Naive thymus-derived CD4-positive, alpha-beta T cell (primary cell): ENCODE measurements at regions of chrX and their contacts with region 1.

Region 1: GRCh38 chrX:55160685-55161552 is 59.2 kb upstream of the PAGE5 start:
- DNase-seq: peak; percentile 77 to 92 (median 89)
- ATAC-seq: peak; percentile 95
- H3K4me3 ChIP-seq: peak overlapping the region; percentile 83
- H3K4me3 Mint-ChIP-seq: peak overlapping the region; percentile 85 to 98 (median 93)
- H3K27ac ChIP-seq: peak overlapping the region; percentile 95
- H3K27ac Mint-ChIP-seq: peak overlapping the region; percentile 91 to 99 (median 98)
- H3K4me1 ChIP-seq: peaks cover 0 to 3% of the 10 kb centered on the region in 2 donors
- H3K4me1 Mint-ChIP-seq: peaks cover 3 to 13% (median 10%) of the 10 kb centered on the region in 7 donors
- H3K27me3 ChIP-seq: no peaks in the 10 kb centered on the region
- H3K27me3 Mint-ChIP-seq: peaks cover 0 to 9% (median 0%) of the 10 kb centered on the region in 5 donors

Region 2: GRCh38 chrX:53321230-53321942 is 1839.5 kb before region 1 on chrX:
- CTCF ChIA-PET with region 1: no interaction called
- POLR2A ChIA-PET with region 1: no interaction called
- intact Hi-C with region 1: no loop called
- DNase-seq: peak in 3 of 9 donors; percentile 7 to 11 (median 9)
- ATAC-seq: peak; percentile 56
- H3K4me3 ChIP-seq: peak overlapping the region; percentile 35
- H3K4me3 Mint-ChIP-seq: peak overlapping the region; percentile 44 to 89 (median 72)
- H3K27ac ChIP-seq: no peak overlapping the region
- H3K27ac Mint-ChIP-seq: peak overlapping the region in 1 of 9 donors; percentile 56
- H3K4me1 ChIP-seq: no peaks in the 10 kb centered on the region
- H3K4me1 Mint-ChIP-seq: peaks cover 8 to 21% (median 13%) of the 10 kb centered on the region in 7 donors
- H3K27me3 ChIP-seq: peaks cover 0 to 11% of the 10 kb centered on the region in 2 donors
- H3K27me3 Mint-ChIP-seq: peaks cover 28 to 71% (median 50%) of the 10 kb centered on the region in 5 donors

Region 3: DNA sequence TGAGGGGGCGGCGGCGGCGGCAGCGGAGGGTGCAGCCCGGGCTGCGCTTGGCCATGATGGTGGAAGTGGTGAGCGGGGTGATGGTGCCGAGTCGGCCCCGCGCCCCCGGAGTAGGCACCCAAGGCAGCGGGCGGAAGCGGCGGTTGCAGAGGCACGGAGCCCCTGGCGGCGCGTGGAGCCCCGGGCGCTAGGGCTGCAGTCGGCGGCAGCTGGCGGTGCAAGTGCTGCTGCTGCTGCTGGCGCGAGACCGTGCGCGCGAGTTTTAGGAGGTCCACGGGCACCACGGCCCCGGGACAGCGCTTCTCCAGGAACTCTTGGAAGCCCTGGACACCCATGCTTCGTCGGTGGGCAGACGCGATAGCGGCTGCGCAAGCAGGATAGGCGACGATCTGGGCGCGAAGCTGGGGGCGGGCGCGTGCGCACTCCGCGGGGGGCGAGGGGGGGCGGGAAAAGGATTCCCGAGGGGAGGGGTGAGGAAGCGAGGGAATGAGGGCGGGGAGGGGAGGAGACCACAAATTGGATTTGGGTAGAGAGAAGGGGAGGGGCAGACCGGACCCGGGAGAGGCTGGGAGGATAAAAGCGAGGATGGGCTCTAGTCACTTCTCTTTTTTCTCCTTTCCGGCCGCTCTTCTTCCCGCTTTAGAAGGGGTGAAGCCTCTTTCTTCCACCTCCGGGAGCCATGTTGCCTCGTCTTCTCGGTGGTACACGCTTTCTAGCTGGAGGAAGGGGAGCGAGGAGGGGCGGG is 977.9 kb before region 1 on chrX and contains the start of gene FAM120C:
- CTCF ChIA-PET with region 1: no interaction called
- POLR2A ChIA-PET with region 1: no interaction called
- intact Hi-C with region 1: loop called (anchors 1 to 2 kb)
- DNase-seq: peak; percentile 23 to 70 (median 65)
- ATAC-seq: peak; percentile 79
- H3K4me3 ChIP-seq: peak within 1 kb of the TSS; percentile 62
- H3K4me3 Mint-ChIP-seq: peak within 1 kb of the TSS; percentile 70 to 92 (median 88)
- H3K27ac ChIP-seq: peak within 1 kb of the TSS; percentile 78
- H3K27ac Mint-ChIP-seq: peak within 1 kb of the TSS; percentile 81 to 91 (median 88)
- H3K4me1 ChIP-seq: peaks cover 22 to 27% of the 10 kb centered on the region in 2 donors
- H3K4me1 Mint-ChIP-seq: peaks cover 30 to 42% (median 39%) of the 10 kb centered on the region in 7 donors
- H3K27me3 ChIP-seq: no peaks in the 10 kb centered on the region
- H3K27me3 Mint-ChIP-seq: no peaks in the 10 kb centered on the region
- total RNA-seq, gene FAM120C: 13.5 to 24.7 (median 17.6) TPM

Region 4: DNA sequence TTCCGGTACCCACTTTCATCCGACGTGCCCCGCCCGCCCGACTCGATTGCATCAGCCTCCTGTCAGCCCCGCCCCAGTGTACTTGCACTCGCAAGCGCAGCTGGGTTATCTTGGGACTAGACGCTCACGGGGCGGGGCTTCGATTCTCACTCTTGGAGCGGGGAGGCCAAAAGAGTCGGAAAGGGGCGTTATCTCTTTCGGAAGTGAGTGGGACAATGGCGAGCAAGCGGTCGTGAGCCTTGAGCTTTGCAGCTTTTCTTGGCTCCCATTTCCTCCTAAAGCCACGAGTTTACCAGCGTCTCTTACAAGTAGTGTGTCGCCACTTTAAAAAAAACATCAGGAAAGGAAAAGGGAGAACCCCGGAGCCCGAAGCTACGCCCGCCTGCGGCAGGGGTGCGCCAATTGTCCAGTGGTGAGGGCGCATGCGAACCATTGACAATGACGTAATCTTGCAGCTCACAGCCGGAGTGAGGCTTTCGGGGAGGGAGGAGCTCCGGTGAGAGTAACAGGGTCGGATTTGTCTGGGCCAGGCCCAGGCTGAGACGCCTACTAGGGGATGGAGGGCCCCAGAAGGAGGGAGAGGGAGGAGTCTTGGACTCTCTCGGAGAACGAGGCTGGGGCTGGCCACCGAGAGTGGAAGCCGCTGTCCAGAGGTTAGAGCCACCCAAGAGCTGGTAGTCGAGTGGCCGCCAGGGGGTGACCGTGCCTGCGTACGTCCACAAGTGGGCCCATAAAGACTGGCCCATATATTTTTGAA is 521.4 kb before region 1 on chrX:
- CTCF ChIA-PET with region 1: no interaction called
- POLR2A ChIA-PET with region 1: interaction called, 5 read pairs
- intact Hi-C with region 1: loop called (anchors 1 kb)
- DNase-seq: peak; percentile 73 to 95 (median 89)
- ATAC-seq: peak; percentile 93
- H3K4me3 ChIP-seq: peak overlapping the region; percentile 64
- H3K4me3 Mint-ChIP-seq: peak overlapping the region; percentile 74 to 98 (median 94)
- H3K27ac ChIP-seq: peak overlapping the region; percentile 98
- H3K27ac Mint-ChIP-seq: peak overlapping the region; percentile 96 to 100 (median 99)
- H3K4me1 ChIP-seq: peaks cover 4% of the 10 kb centered on the region in 2 donors
- H3K4me1 Mint-ChIP-seq: peaks cover 0 to 16% (median 10%) of the 10 kb centered on the region in 7 donors
- H3K27me3 ChIP-seq: no peaks in the 10 kb centered on the region
- H3K27me3 Mint-ChIP-seq: no peaks in the 10 kb centered on the region

Region 5: GRCh38 chrX:54865208-54865607 is 295.7 kb before region 1 on chrX:
- CTCF ChIA-PET with region 1: no interaction called
- POLR2A ChIA-PET with region 1: no interaction called
- intact Hi-C with region 1: no loop called
- DNase-seq: no peak
- ATAC-seq: no peak
- H3K4me3 ChIP-seq: no peak overlapping the region
- H3K4me3 Mint-ChIP-seq: no peak overlapping the region
- H3K27ac ChIP-seq: no peak overlapping the region
- H3K27ac Mint-ChIP-seq: no peak overlapping the region
- H3K4me1 ChIP-seq: no peaks in the 10 kb centered on the region
- H3K4me1 Mint-ChIP-seq: no peaks in the 10 kb centered on the region
- H3K27me3 ChIP-seq: no peaks in the 10 kb centered on the region
- H3K27me3 Mint-ChIP-seq: peaks cover 0 to 10% (median 0%) of the 10 kb centered on the region in 5 donors

Region 6: GRCh38 chrX:54999717-55000598 is 161.0 kb before region 1 on chrX and contains the start of gene APEX2:
- CTCF ChIA-PET with region 1: interaction called, 4 read pairs
- POLR2A ChIA-PET with region 1: no interaction called
- intact Hi-C with region 1: loop called (anchors 1 kb)
- DNase-seq: peak; percentile 66 to 89 (median 85)
- ATAC-seq: peak; percentile 97
- H3K4me3 ChIP-seq: peak within 1 kb of the TSS; percentile 95
- H3K4me3 Mint-ChIP-seq: peak within 1 kb of the TSS; percentile 90 to 97 (median 94)
- H3K27ac ChIP-seq: peak within 1 kb of the TSS; percentile 90
- H3K27ac Mint-ChIP-seq: peak within 1 kb of the TSS; percentile 94 to 99 (median 96)
- H3K4me1 ChIP-seq: peaks cover 9 to 17% of the 10 kb centered on the region in 2 donors
- H3K4me1 Mint-ChIP-seq: peaks cover 8 to 35% (median 26%) of the 10 kb centered on the region in 7 donors
- H3K27me3 ChIP-seq: no peaks in the 10 kb centered on the region
- H3K27me3 Mint-ChIP-seq: no peaks in the 10 kb centered on the region
- total RNA-seq, gene APEX2: 6.5 to 24.6 (median 12.2) TPM

Region 7: GRCh38 chrX:55142206-55142918 is 18.6 kb before region 1 on chrX:
- CTCF ChIA-PET with region 1: no interaction called
- POLR2A ChIA-PET with region 1: no interaction called
- intact Hi-C with region 1: no loop called
- DNase-seq: no peak
- ATAC-seq: no peak
- H3K4me3 ChIP-seq: no peak overlapping the region
- H3K4me3 Mint-ChIP-seq: no peak overlapping the region
- H3K27ac ChIP-seq: no peak overlapping the region
- H3K27ac Mint-ChIP-seq: no peak overlapping the region
- H3K4me1 ChIP-seq: no peaks in the 10 kb centered on the region
- H3K4me1 Mint-ChIP-seq: no peaks in the 10 kb centered on the region
- H3K27me3 ChIP-seq: no peaks in the 10 kb centered on the region
- H3K27me3 Mint-ChIP-seq: no peaks in the 10 kb centered on the region

Region 8: GRCh38 chrX:55201930-55202579 is 41.1 kb after region 1 on chrX:
- CTCF ChIA-PET with region 1: no interaction called
- POLR2A ChIA-PET with region 1: no interaction called
- intact Hi-C with region 1: no loop called
- DNase-seq: no peak
- ATAC-seq: no peak
- H3K4me3 ChIP-seq: no peak overlapping the region
- H3K4me3 Mint-ChIP-seq: no peak overlapping the region
- H3K27ac ChIP-seq: no peak overlapping the region
- H3K27ac Mint-ChIP-seq: no peak overlapping the region
- H3K4me1 ChIP-seq: no peaks in the 10 kb centered on the region
- H3K4me1 Mint-ChIP-seq: peaks cover 0 to 2% (median 0%) of the 10 kb centered on the region in 7 donors
- H3K27me3 ChIP-seq: no peaks in the 10 kb centered on the region
- H3K27me3 Mint-ChIP-seq: peaks cover 0 to 2% (median 0%) of the 10 kb centered on the region in 5 donors

Region 9: GRCh38 chrX:55342533-55343501 is 181.9 kb after region 1 on chrX:
- CTCF ChIA-PET with region 1: no interaction called
- POLR2A ChIA-PET with region 1: no interaction called
- intact Hi-C with region 1: loop called in 1 of 2 experiments (anchors 2 kb)
- DNase-seq: peak in 8 of 9 donors; percentile 21 to 72 (median 52)
- ATAC-seq: peak; percentile 80
- H3K4me3 ChIP-seq: no peak overlapping the region
- H3K4me3 Mint-ChIP-seq: peak overlapping the region in 9 of 10 donors; percentile 0 to 65 (median 22)
- H3K27ac ChIP-seq: no peak overlapping the region
- H3K27ac Mint-ChIP-seq: peak overlapping the region in 5 of 9 donors; percentile 19 to 35 (median 24)
- H3K4me1 ChIP-seq: peaks cover 0 to 7% of the 10 kb centered on the region in 2 donors
- H3K4me1 Mint-ChIP-seq: peaks cover 10 to 26% (median 21%) of the 10 kb centered on the region in 7 donors
- H3K27me3 ChIP-seq: no peaks in the 10 kb centered on the region
- H3K27me3 Mint-ChIP-seq: peaks cover 0 to 9% (median 0%) of the 10 kb centered on the region in 5 donors

Region 10: DNA sequence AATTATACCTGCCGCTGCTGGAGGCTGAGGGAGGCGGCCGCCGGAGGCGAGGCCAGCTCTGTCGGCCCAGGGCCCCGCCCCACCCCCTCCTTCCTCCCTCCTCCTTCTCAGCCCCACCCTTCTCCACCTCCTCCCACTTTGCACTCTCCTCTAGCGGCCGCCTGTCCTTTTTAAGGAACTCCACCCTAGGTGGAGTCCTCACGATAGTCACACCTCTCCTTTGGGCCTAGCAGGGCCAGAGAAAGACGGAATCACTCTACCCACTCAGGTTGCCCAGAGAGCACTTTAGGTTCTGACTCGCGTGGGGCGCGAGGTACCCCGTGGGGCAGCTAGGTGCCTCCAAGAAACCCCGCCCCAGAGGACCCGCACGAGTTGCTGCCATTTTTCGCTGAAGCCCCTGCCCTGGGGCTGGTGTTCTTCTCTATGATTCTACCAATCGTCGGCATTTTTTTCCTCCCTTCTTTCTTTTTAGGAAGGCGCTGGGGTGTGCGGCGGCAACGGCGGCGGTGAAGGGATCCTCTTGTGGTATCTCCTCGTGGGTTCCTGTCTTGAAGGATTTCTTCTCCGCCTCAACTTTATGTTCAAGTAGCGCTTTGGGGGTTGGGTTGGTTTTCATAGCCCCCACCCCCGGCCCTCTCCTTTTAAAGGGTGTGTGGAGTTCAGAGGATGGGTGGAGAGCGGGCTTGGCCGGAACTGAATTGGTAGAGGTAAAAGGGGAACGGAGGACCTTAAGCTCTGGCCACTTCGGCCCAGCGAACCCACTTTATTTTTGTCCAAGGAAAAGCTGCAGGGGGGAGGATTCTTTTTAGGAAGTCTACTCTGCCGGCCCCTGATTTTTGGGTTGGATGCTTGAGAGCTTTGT is 1071.5 kb after region 1 on chrX and contains the start of gene KLF8:
- CTCF ChIA-PET with region 1: no interaction called
- POLR2A ChIA-PET with region 1: no interaction called
- intact Hi-C with region 1: loop called in 1 of 2 experiments (anchors 2 kb)
- DNase-seq: peak in 6 of 9 donors; percentile 3 to 40 (median 8)
- ATAC-seq: peak; percentile 73
- H3K4me3 ChIP-seq: peak within 1 kb of the TSS; percentile 41
- H3K4me3 Mint-ChIP-seq: peak within 1 kb of the TSS; percentile 80 to 89 (median 84)
- H3K27ac ChIP-seq: no peak within 1 kb of the TSS
- H3K27ac Mint-ChIP-seq: peak within 1 kb of the TSS in 6 of 9 donors; percentile 1 to 90 (median 32)
- H3K4me1 ChIP-seq: peaks cover 0 to 5% of the 10 kb centered on the region in 2 donors
- H3K4me1 Mint-ChIP-seq: peaks cover 5 to 48% (median 18%) of the 10 kb centered on the region in 7 donors
- H3K27me3 ChIP-seq: no peaks in the 10 kb centered on the region
- H3K27me3 Mint-ChIP-seq: peaks cover 0 to 4% (median 0%) of the 10 kb centered on the region in 5 donors
- total RNA-seq, gene KLF8: 0.38 to 17.9 (median 6.3) TPM

Region 11: DNA sequence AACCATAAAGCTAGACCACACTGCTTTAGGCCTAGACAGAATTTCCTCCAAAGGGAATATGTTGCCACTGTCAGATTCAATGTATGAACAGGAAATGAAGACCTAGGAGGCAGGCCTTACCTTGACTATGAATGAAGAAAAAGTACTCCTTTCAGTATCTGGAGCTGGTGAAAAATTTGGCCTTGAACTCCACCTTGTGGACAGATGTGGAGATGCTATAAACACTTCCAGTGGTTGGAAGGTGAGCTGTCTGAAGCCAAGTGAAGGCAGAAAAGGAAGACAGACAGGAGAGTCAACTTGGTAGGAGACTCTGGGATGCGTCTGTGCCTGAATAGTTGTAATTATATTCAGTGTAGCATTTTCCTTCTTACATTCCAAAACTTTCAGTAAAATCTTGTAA is 1817.3 kb after region 1 on chrX:
- CTCF ChIA-PET with region 1: no interaction called
- POLR2A ChIA-PET with region 1: no interaction called
- intact Hi-C with region 1: loop called in 1 of 2 experiments (anchors 10 kb)
- DNase-seq: peak in 8 of 9 donors; percentile 19 to 72 (median 56)
- ATAC-seq: peak; percentile 72
- H3K4me3 ChIP-seq: no peak overlapping the region
- H3K4me3 Mint-ChIP-seq: no peak overlapping the region
- H3K27ac ChIP-seq: no peak overlapping the region
- H3K27ac Mint-ChIP-seq: peak overlapping the region in 5 of 9 donors; percentile 4 to 75 (median 27)
- H3K4me1 ChIP-seq: no peaks in the 10 kb centered on the region
- H3K4me1 Mint-ChIP-seq: peaks cover 0 to 6% (median 0%) of the 10 kb centered on the region in 7 donors
- H3K27me3 ChIP-seq: no peaks in the 10 kb centered on the region
- H3K27me3 Mint-ChIP-seq: no peaks in the 10 kb centered on the region